Activated B cell treated with CpG ODN at 0.5 μM for 24 hours (primary cell): ENCODE measurements at regions of chr17 and their contacts with region 1.

Region 1: GRCh38 chr17:29789196-29790170 is 140.5 kb downstream of the SSH2 start:
- DNase-seq: no peak
- ATAC-seq: no peak
- H3K4me3 Mint-ChIP-seq: no peak overlapping the region
- H3K27ac Mint-ChIP-seq: no peak overlapping the region
- H3K4me1 Mint-ChIP-seq: peaks cover 5% of the 10 kb centered on the region
- H3K27me3 Mint-ChIP-seq: no peaks in the 10 kb centered on the region
- CTCF ChIP-seq: no peak

Region 2: GRCh38 chr17:29710891-29711418 is 78.5 kb before region 1 on chr17:
- CTCF ChIA-PET with region 1: no interaction called
- POLR2A ChIA-PET with region 1: no interaction called
- intact Hi-C with region 1: no loop called
- DNase-seq: no peak
- ATAC-seq: no peak
- H3K4me3 Mint-ChIP-seq: no peak overlapping the region
- H3K27ac Mint-ChIP-seq: peak overlapping the region; percentile 72
- H3K4me1 Mint-ChIP-seq: peaks cover 93% of the 10 kb centered on the region
- H3K27me3 Mint-ChIP-seq: no peaks in the 10 kb centered on the region
- CTCF ChIP-seq: no peak

Region 3: DNA sequence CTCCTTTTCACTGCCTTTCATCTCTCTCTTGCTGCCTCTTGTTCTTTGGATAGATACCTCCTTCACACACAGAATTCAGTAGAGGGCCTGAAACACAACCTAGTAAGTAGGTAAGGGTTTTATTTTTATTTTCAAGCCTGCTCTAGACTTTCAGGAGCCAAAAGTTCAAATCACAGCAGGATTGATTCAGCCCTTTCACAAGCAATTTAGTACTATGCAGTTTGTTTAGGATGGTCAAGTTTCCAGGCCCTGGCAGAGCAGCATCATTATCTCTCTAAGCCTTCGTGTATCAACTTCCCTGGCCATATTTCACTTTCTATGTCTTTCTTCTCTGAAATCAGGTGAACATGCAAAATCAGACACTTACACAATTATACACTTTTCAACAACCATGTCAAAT is 17.9 kb before region 1 on chr17:
- CTCF ChIA-PET with region 1: no interaction called
- POLR2A ChIA-PET with region 1: interaction called, 11 read pairs
- intact Hi-C with region 1: no loop called
- DNase-seq: no peak
- ATAC-seq: no peak
- H3K4me3 Mint-ChIP-seq: no peak overlapping the region
- H3K27ac Mint-ChIP-seq: peak overlapping the region; percentile 90
- H3K4me1 Mint-ChIP-seq: peaks cover 18% of the 10 kb centered on the region
- H3K27me3 Mint-ChIP-seq: no peaks in the 10 kb centered on the region
- CTCF ChIP-seq: no peak